HEK293 (cell line): ENCODE measurements at regions of chr1 and their contacts with region 1.

Region 1: GRCh38 chr1:75841421-75841820 is 44.7 kb downstream of the MSH4 start:
- H3K4me3 ChIP-seq: no peak overlapping the region
- H3K27ac ChIP-seq: no peak overlapping the region
- H3K4me1 ChIP-seq: no peaks in the 10 kb centered on the region
- CTCF ChIP-seq: no peak

Region 2: GRCh38 chr1:75765697-75766355 is 75.6 kb before region 1 on chr1:
- CTCF ChIA-PET with region 1: interaction called, 10 read pairs
- POLR2A ChIA-PET with region 1: no interaction called
- H3K4me3 ChIP-seq: no peak overlapping the region
- H3K27ac ChIP-seq: no peak overlapping the region
- H3K4me1 ChIP-seq: no peaks in the 10 kb centered on the region
- CTCF ChIP-seq: no peak

Region 3: GRCh38 chr1:75811211-75811981 is 30.0 kb before region 1 on chr1:
- CTCF ChIA-PET with region 1: no interaction called
- POLR2A ChIA-PET with region 1: no interaction called
- H3K4me3 ChIP-seq: no peak overlapping the region
- H3K27ac ChIP-seq: no peak overlapping the region
- H3K4me1 ChIP-seq: no peaks in the 10 kb centered on the region
- CTCF ChIP-seq: no peak